GM12878 (cell line): ENCODE measurements at regions of chr4 and their contacts with region 1.

Region 1: DNA sequence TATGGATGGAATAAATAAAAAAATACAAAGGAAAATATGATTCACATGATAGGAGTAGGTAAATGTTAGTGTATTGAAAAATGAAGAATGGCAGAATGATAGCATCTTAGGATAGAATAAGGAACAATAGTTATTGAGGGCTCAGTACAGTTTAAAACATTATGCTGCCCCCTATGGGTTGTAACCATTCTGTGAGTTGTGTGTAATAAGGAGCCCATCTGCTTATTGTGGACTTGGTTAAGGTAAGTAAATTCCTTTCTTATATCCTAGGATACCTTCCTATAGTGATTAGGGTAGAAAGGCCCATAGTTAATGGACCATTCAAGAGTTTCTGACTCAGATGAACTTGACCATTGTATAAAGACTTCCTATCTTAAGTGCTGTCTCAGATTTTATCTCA is 195.8 kb downstream of the PDHA2 start:
- DNase-seq: no peak
- ATAC-seq: peak; percentile 84
- H3K4me3 ChIP-seq: no peak overlapping the region
- H3K27ac ChIP-seq: no peak overlapping the region
- H3K4me1 ChIP-seq: no peaks in the 10 kb centered on the region
- H3K27me3 ChIP-seq: no peaks in the 10 kb centered on the region
- CTCF ChIP-seq: peak; percentile 22 to 52 (median 30); a peak in 3 of 6 replicates
- EP300 ChIP-seq: no peak
- POLR2A ChIP-seq: no peak
- RAD21 ChIP-seq: peak; percentile 32; the same call in 1 of the 2 replicates

Region 2: GRCh38 chr4:95835672-95836071 is 200.1 kb before region 1 on chr4:
- CTCF ChIA-PET with region 1: no interaction called
- POLR2A ChIA-PET with region 1: no interaction called
- RAD21 ChIA-PET with region 1: no interaction called
- SMC1A ChIA-PET with region 1: interaction called, 3 read pairs
- in situ Hi-C with region 1: no loop called
- intact Hi-C with region 1: loop called (anchors 2 kb)
- DNase-seq: no peak
- ATAC-seq: peak; percentile 43
- H3K4me3 ChIP-seq: no peak overlapping the region
- H3K27ac ChIP-seq: no peak overlapping the region
- H3K4me1 ChIP-seq: no peaks in the 10 kb centered on the region
- H3K27me3 ChIP-seq: no peaks in the 10 kb centered on the region
- CTCF ChIP-seq: peak; percentile 3 to 41 (median 27); a peak in 1 of 6 replicates
- EP300 ChIP-seq: no peak
- POLR2A ChIP-seq: no peak
- RAD21 ChIP-seq: no peak